Dorsolateral prefrontal cortex (tissue), 120 donors: ENCODE measurements at regions of chr9 and their contacts with region 1.

Region 1: GRCh38 chr9:126500684-126501382 is 112.9 kb upstream of the LMX1B start:
- DNase-seq: peak; percentile 79 to 92 (median 88)
- H3K4me3 ChIP-seq: peak overlapping the region in 21 of 59 donors; percentile 2 to 65 (median 14)
- H3K27ac ChIP-seq: peak overlapping the region in 50 of 59 donors; percentile 0 to 87 (median 70)
- H3K27me3 ChIP-seq: no peaks in the 10 kb centered on the region
- CTCF ChIP-seq: peak; percentile 93 to 100 (median 98)

Region 2: GRCh38 chr9:126411225-126411947 is 89.4 kb before region 1 on chr9:
- intact Hi-C with region 1: no loop called
- DNase-seq: peak in 1 of 10 donors; percentile 4
- H3K4me3 ChIP-seq: no peak overlapping the region
- H3K27ac ChIP-seq: peak overlapping the region in 21 of 59 donors; percentile 7 to 65 (median 24)
- H3K27me3 ChIP-seq: no peaks in the 10 kb centered on the region
- CTCF ChIP-seq: no peak

Region 3: GRCh38 chr9:126439402-126439765 is 61.4 kb before region 1 on chr9:
- intact Hi-C with region 1: loop called in 1 of 2 experiments (anchors 5 kb)
- DNase-seq: no peak
- H3K4me3 ChIP-seq: no peak overlapping the region
- H3K27ac ChIP-seq: peak overlapping the region in 55 of 59 donors; percentile 33 to 94 (median 82)
- H3K27me3 ChIP-seq: no peaks in the 10 kb centered on the region
- CTCF ChIP-seq: no peak

Region 4: DNA sequence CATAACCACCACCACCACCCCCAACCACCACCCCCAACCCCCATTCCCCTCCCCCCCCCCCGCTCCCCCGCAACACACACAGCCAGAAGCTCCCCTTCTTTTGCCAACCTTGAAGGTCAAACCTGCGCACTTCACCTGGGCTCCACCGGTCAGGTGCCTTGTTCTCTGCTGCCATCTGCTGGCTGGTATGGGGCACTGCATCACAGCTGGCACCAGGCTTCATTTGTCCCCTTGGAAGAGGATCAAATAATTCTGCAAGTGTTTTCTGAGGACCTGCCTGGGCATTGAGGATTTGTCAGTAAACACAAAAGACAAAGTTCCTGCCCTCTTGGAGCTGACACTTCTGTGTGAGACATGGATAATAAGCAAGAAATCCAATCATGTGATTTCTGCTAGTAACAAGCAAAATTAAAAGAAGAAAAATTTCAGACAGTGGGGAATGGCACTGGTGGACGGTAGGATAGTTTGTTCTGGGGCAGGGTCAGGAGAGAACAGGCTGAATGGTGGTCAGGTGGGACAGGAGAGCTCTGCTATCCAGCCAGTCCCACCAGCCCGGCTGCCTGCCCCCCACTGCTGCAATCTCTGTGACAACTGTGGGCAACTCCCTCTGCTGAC is 57.3 kb after region 1 on chr9:
- intact Hi-C with region 1: loop called (anchors 1 to 2 kb)
- DNase-seq: peak in 9 of 10 donors; percentile 35 to 70 (median 62)
- H3K4me3 ChIP-seq: no peak overlapping the region
- H3K27ac ChIP-seq: no peak overlapping the region
- H3K27me3 ChIP-seq: peaks cover 0 to 4% (median 0%) of the 10 kb centered on the region in 45 donors
- CTCF ChIP-seq: peak; percentile 60 to 95 (median 86)

Region 5: DNA sequence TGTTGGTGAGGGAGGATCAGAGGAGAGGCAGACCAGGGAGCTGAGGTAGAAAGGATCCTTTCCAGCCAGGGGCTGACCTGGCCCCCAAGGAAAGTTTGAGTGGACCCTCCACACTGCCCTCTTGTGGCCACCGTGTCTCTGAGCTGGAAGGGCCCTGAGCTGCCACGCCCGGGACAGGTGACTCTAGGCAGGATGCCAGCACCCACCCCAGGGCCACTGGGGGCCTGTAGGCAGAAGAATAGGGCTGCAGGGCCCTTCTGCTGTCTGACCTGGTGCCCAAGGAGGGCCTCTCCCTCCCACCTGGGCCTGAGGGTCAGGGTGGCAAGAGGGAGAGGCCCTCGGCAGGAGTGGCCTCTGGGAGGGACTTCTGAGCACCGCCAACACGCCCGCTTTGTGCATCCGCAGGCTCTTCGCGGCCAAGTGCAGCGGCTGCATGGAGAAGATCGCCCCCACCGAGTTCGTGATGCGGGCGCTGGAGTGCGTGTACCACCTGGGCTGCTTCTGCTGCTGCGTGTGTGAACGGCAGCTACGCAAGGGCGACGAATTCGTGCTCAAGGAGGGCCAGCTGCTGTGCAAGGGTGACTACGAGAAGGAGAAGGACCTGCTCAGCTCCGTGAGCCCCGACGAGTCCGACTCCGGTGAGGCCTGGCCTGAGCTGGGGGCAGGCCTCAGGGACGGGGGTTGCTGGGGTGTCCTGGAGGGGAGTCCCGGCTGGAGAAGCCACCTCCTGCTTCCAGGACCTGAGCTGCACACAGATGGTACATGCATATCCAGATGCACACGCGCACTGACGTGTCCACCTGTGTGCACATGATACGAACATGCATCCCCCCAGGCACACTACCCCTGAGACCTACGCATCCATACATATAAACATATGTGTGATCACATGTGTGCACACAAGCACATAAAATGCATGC is 189.9 kb after region 1 on chr9:
- intact Hi-C with region 1: loop called in 1 of 2 experiments (anchors 10 kb)
- DNase-seq: no peak
- H3K4me3 ChIP-seq: no peak overlapping the region
- H3K27ac ChIP-seq: no peak overlapping the region
- H3K27me3 ChIP-seq: peaks cover 0 to 17% (median 0%) of the 10 kb centered on the region in 45 donors
- CTCF ChIP-seq: peak in 54 of 56 donors; percentile 18 to 71 (median 54)

Region 6: GRCh38 chr9:126781186-126782052 is 280.6 kb after region 1 on chr9:
- intact Hi-C with region 1: loop called (anchors 1 to 2 kb)
- DNase-seq: peak; percentile 74 to 90 (median 84)
- H3K4me3 ChIP-seq: peak overlapping the region in 29 of 59 donors; percentile 13 to 48 (median 27)
- H3K27ac ChIP-seq: peak overlapping the region in 1 of 59 donors; percentile 31
- H3K27me3 ChIP-seq: peaks cover 0 to 24% (median 0%) of the 10 kb centered on the region in 45 donors
- CTCF ChIP-seq: peak; percentile 76 to 100 (median 97)